CD4-positive, alpha-beta T cell (primary cell): ENCODE measurements at regions of chr16 and their contacts with region 1.

Region 1: DNA sequence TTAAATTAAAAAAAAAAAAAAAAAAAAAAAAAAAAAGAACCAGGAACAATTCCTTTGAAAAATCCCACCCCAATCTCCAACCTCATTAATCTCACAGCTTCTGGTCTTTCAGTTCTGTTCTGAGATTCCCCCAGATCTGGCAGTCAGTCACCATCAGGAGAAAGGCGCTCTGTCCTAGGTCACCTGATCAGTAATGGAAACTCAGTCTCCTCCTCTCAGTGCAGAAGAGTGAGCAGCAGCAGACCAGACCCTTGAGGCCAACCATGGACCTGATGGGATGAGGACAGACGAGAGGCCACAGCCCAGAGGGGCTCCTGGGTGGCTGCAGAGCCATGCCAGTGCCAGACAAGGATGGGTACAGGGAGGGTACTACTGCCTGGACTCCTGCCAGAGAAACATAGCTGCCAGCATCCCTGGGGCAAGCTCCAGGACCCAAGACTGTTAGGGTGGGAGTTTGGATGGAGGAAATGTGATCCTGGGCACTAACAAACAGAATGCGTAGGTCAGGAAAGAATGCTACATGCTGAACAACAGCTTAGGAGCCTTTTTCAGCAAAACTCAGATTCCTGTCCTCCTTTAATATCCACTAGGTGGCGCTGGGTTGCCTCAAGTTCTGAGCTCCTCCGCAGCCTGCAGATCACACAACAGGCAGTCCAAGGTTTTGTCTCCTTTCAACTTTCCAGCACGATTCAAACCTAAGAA is 28.7 kb downstream of the MPG start:
- DNase-seq: peak; percentile 19 to 83 (median 44)
- ATAC-seq: peak; percentile 80
- H3K4me3 ChIP-seq: no peak overlapping the region
- H3K4me3 Mint-ChIP-seq: no peak overlapping the region
- H3K27ac ChIP-seq: no peak overlapping the region
- H3K27ac Mint-ChIP-seq: no peak overlapping the region
- H3K4me1 ChIP-seq: no peaks in the 10 kb centered on the region
- H3K4me1 Mint-ChIP-seq: peaks cover 5% of the 10 kb centered on the region
- H3K27me3 ChIP-seq: no peaks in the 10 kb centered on the region
- H3K27me3 Mint-ChIP-seq: no peaks in the 10 kb centered on the region
- CTCF ChIP-seq: peak; percentile 78

Region 2: DNA sequence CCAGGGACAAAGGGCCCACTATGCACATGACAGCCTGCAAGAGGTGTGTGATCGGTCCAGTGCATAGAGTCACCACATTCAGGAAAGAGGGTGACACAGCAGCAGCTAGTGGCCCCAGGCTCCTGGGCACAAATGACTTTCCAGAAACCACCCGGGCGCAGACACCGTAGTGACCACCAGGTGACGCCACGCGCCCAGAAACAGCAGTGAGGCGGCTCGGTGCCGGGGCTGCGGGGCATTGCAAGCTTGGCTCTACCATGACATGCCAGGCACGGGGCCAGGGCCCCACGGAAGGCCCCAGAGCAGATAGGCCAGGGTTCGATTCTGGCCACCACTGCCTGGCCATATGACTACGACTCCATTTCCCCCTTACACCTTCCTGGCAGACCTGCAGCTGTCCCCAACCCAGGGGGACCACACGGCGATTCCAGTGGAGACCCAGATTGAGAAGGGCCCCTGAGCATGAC is 41.1 kb before region 1 on chr16:
- CTCF ChIA-PET with region 1: interaction called, 11 read pairs
- POLR2A ChIA-PET with region 1: interaction called, 3 read pairs
- intact Hi-C with region 1: no loop called
- DNase-seq: peak; percentile 71 to 88 (median 80)
- ATAC-seq: peak; percentile 99
- H3K4me3 ChIP-seq: no peak overlapping the region
- H3K4me3 Mint-ChIP-seq: no peak overlapping the region
- H3K27ac ChIP-seq: no peak overlapping the region
- H3K27ac Mint-ChIP-seq: no peak overlapping the region
- H3K4me1 ChIP-seq: peaks cover 6% of the 10 kb centered on the region
- H3K4me1 Mint-ChIP-seq: no peaks in the 10 kb centered on the region
- H3K27me3 ChIP-seq: peaks cover 5 to 10% of the 10 kb centered on the region in 2 experiments
- H3K27me3 Mint-ChIP-seq: peaks cover 33% of the 10 kb centered on the region
- CTCF ChIP-seq: peak; percentile 88

Region 3: GRCh38 chr16:117379-118365 is 10.9 kb after region 1 on chr16:
- CTCF ChIA-PET with region 1: interaction called, 11 read pairs
- POLR2A ChIA-PET with region 1: interaction called, 4 read pairs
- intact Hi-C with region 1: no loop called
- DNase-seq: peak; percentile 53 to 81 (median 62)
- ATAC-seq: peak; percentile 87
- H3K4me3 ChIP-seq: no peak overlapping the region
- H3K4me3 Mint-ChIP-seq: no peak overlapping the region
- H3K27ac ChIP-seq: no peak overlapping the region
- H3K27ac Mint-ChIP-seq: no peak overlapping the region
- H3K4me1 ChIP-seq: peaks cover 5% of the 10 kb centered on the region
- H3K4me1 Mint-ChIP-seq: peaks cover 11% of the 10 kb centered on the region
- H3K27me3 ChIP-seq: no peaks in the 10 kb centered on the region
- H3K27me3 Mint-ChIP-seq: no peaks in the 10 kb centered on the region
- CTCF ChIP-seq: peak; percentile 81

Region 4: DNA sequence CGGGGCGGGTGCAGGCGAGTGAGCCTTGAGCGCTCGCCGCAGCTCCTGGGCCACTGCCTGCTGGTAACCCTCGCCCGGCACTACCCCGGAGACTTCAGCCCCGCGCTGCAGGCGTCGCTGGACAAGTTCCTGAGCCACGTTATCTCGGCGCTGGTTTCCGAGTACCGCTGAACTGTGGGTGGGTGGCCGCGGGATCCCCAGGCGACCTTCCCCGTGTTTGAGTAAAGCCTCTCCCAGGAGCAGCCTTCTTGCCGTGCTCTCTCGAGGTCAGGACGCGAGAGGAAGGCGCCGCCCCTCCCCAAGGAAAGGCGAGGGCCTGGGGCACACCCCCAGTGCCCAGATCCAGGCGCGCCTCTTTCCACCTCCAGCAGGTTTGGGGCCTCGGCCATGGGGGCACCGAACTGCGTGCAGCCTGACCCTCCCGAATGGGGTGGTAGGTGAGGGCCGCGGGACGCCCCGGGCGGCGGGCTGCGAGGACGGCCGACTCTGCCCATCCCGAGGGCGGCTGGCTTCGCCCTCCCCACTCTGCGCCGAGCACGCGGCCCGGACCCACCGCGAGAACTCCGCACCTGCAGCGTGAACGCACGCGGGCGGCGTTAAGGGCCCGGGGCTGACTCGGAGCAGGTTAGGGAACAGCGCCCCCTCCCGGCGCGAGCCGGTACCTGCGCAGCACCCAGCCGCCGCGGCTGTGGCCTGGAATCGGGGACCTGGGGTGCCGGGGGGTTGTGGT is 74.3 kb after region 1 on chr16:
- CTCF ChIA-PET with region 1: interaction called, 8 read pairs
- POLR2A ChIA-PET with region 1: interaction called, 6 read pairs
- intact Hi-C with region 1: loop called (anchors 1 kb)
- DNase-seq: peak; percentile 76 to 92 (median 82)
- ATAC-seq: peak; percentile 95
- H3K4me3 ChIP-seq: peak overlapping the region; percentile 46
- H3K4me3 Mint-ChIP-seq: no peak overlapping the region
- H3K27ac ChIP-seq: no peak overlapping the region
- H3K27ac Mint-ChIP-seq: no peak overlapping the region
- H3K4me1 ChIP-seq: peaks cover 25% of the 10 kb centered on the region
- H3K4me1 Mint-ChIP-seq: no peaks in the 10 kb centered on the region
- H3K27me3 ChIP-seq: peaks cover 27 to 33% of the 10 kb centered on the region in 2 experiments
- H3K27me3 Mint-ChIP-seq: peaks cover 28% of the 10 kb centered on the region
- CTCF ChIP-seq: peak; percentile 92

Region 5: DNA sequence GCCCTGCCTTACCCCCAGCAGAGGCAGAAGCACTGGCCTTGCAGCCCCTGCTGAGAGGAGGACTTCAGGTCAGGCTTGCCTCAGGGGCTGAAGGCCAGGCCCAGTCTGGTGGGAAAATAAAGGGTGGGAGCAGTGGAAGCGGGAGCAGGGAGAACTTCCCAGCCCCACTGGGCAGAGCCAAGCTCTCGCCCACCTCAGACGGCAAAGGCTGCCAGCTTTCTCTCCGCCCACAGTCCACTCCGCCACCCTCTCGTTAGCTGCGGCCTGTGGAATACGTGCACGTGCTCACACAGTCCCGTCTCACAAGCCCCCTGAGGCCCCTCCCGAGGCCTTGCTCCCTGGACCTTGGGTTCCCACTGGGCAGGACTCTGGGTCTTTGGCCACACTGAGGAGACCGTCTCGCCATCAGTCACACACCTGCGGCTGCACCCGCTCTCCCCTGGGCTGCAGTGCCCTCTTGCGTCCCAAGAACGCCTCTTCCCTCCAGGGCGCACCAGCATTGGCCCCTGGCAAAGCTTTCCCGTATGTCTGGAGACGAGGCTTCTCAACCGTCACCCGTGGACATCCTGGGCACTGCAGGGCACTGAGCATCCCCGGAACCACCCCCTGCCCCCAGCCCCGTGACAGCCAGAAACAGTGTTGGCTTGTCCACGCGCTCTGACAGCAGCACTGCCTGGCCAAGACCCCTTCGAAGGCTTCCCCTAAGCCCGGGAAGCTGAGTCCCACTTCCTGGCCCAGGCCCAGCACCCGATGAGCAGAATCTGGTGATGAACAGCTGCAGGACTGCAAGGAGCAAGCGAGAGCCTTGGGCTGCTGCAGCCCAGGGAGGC is 255.3 kb after region 1 on chr16:
- CTCF ChIA-PET with region 1: interaction called, 19 read pairs
- POLR2A ChIA-PET with region 1: interaction called, 3 read pairs
- intact Hi-C with region 1: loop called (anchors 1 kb)
- DNase-seq: peak; percentile 63 to 88 (median 71)
- ATAC-seq: peak; percentile 99
- H3K4me3 ChIP-seq: no peak overlapping the region
- H3K4me3 Mint-ChIP-seq: peak overlapping the region; percentile 46
- H3K27ac ChIP-seq: no peak overlapping the region
- H3K27ac Mint-ChIP-seq: peak overlapping the region; percentile 50
- H3K4me1 ChIP-seq: peaks cover 22% of the 10 kb centered on the region
- H3K4me1 Mint-ChIP-seq: peaks cover 6% of the 10 kb centered on the region
- H3K27me3 ChIP-seq: no peaks in the 10 kb centered on the region
- H3K27me3 Mint-ChIP-seq: no peaks in the 10 kb centered on the region
- CTCF ChIP-seq: peak; percentile 72

Region 6: GRCh38 chr16:401468-402348 is 294.9 kb after region 1 on chr16 and contains the start of gene DECR2:
- CTCF ChIA-PET with region 1: no interaction called
- POLR2A ChIA-PET with region 1: no interaction called
- intact Hi-C with region 1: loop called in 1 of 2 experiments (anchors 1 kb)
- DNase-seq: peak; percentile 94 to 100 (median 99)
- ATAC-seq: peak; percentile 84
- H3K4me3 ChIP-seq: peak within 1 kb of the TSS; percentile 92
- H3K4me3 Mint-ChIP-seq: peak within 1 kb of the TSS; percentile 98
- H3K27ac ChIP-seq: peak within 1 kb of the TSS; percentile 67 to 81
- H3K27ac Mint-ChIP-seq: peak within 1 kb of the TSS; percentile 97
- H3K4me1 ChIP-seq: peaks cover 21% of the 10 kb centered on the region
- H3K4me1 Mint-ChIP-seq: peaks cover 18% of the 10 kb centered on the region
- H3K27me3 ChIP-seq: no peaks in the 10 kb centered on the region
- H3K27me3 Mint-ChIP-seq: no peaks in the 10 kb centered on the region
- CTCF ChIP-seq: peak; percentile 68
- total RNA-seq, gene DECR2: 5.7 to 7.0 TPM